ENCODE measurements at regions of chr9 and their contacts with region 1.

Region 1: GRCh38 chr9:35903049-35903448 is 3.0 kb upstream of the HRCT1 start:
- DNase-seq: peak in 4 of 5 donors; percentile 64 to 68 (median 65)
- H3K4me3 ChIP-seq: no peak overlapping the region
- H3K4me3 Mint-ChIP-seq: peak overlapping the region in 1 of 8 donors; percentile 13
- H3K27ac ChIP-seq: no peak overlapping the region
- H3K27ac Mint-ChIP-seq: peak overlapping the region in 3 of 7 donors; percentile 30 to 58 (median 48)
- H3K4me1 ChIP-seq: peaks cover 40% of the 10 kb centered on the region
- H3K4me1 Mint-ChIP-seq: peaks cover 17 to 50% (median 31%) of the 10 kb centered on the region in 4 donors
- H3K27me3 ChIP-seq: no peaks in the 10 kb centered on the region
- H3K27me3 Mint-ChIP-seq: peaks cover 0 to 4% of the 10 kb centered on the region in 2 donors

Region 2: GRCh38 chr9:35871497-35871896 is 31.6 kb before region 1 on chr9:
- CTCF ChIA-PET with region 1: no interaction called
- POLR2A ChIA-PET with region 1: no interaction called
- intact Hi-C with region 1: no loop called
- DNase-seq: no peak
- H3K4me3 ChIP-seq: no peak overlapping the region
- H3K4me3 Mint-ChIP-seq: no peak overlapping the region
- H3K27ac ChIP-seq: no peak overlapping the region
- H3K27ac Mint-ChIP-seq: no peak overlapping the region
- H3K4me1 ChIP-seq: no peaks in the 10 kb centered on the region
- H3K4me1 Mint-ChIP-seq: no peaks in the 10 kb centered on the region
- H3K27me3 ChIP-seq: no peaks in the 10 kb centered on the region
- H3K27me3 Mint-ChIP-seq: no peaks in the 10 kb centered on the region

Region 3: DNA sequence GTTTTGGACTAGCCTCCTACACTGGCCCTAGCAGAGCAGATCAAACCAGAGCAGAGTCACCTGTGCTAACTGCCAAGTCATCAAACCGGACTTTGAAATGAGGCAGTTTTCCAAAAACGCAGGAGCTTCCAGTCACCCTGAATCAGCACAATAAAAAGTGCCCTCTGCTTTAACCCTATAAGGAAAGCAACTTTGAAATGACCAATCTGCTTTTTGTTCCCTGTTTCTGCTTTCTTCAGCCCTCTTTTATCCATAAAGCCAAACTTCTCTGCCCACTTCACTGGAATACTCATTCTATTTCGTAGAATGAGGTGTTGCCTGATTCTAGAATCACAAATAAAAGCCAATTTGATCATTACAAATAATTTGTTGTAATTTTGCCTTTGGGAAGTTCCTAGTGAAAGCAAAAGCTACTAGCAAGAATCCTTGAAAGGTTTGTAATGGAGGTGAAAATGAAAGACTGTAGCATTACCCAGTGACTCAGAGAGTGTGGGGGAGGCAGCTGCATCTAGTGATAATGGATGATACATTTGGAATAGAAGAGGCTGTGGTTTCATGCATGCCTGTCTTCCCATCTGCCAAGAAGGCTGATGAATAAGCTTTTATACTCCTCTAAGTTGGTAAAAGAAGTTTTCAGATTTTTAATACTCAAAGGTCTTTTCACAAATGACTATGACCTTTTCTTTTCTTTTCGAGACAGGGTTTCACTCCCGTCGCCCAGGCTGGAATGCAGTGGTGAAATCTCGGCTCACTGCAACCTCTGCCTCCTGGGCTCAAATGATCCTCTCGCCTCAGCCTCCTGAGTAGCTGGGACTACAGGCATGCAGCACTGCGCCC is 21.1 kb after region 1 on chr9:
- CTCF ChIA-PET with region 1: interaction called, 10 read pairs
- POLR2A ChIA-PET with region 1: interaction called, 3 read pairs
- intact Hi-C with region 1: no loop called
- DNase-seq: no peak
- H3K4me3 ChIP-seq: no peak overlapping the region
- H3K4me3 Mint-ChIP-seq: no peak overlapping the region
- H3K27ac ChIP-seq: no peak overlapping the region
- H3K27ac Mint-ChIP-seq: peak overlapping the region in 1 of 7 donors; percentile 37
- H3K4me1 ChIP-seq: no peaks in the 10 kb centered on the region
- H3K4me1 Mint-ChIP-seq: peaks cover 0 to 16% (median 3%) of the 10 kb centered on the region in 4 donors
- H3K27me3 ChIP-seq: no peaks in the 10 kb centered on the region
- H3K27me3 Mint-ChIP-seq: no peaks in the 10 kb centered on the region

Region 4: GRCh38 chr9:35945341-35946018 is 42.4 kb after region 1 on chr9:
- CTCF ChIA-PET with region 1: interaction called, 379 read pairs
- POLR2A ChIA-PET with region 1: interaction called, 10 read pairs
- intact Hi-C with region 1: loop called (anchors 1 kb)
- DNase-seq: peak; percentile 43 to 58 (median 55)
- H3K4me3 ChIP-seq: no peak overlapping the region
- H3K4me3 Mint-ChIP-seq: peak overlapping the region in 7 of 8 donors; percentile 26 to 74 (median 61)
- H3K27ac ChIP-seq: no peak overlapping the region
- H3K27ac Mint-ChIP-seq: peak overlapping the region; percentile 3 to 82 (median 58)
- H3K4me1 ChIP-seq: peaks cover 70% of the 10 kb centered on the region
- H3K4me1 Mint-ChIP-seq: peaks cover 43 to 72% (median 65%) of the 10 kb centered on the region in 4 donors
- H3K27me3 ChIP-seq: no peaks in the 10 kb centered on the region
- H3K27me3 Mint-ChIP-seq: no peaks in the 10 kb centered on the region

Region 5: DNA sequence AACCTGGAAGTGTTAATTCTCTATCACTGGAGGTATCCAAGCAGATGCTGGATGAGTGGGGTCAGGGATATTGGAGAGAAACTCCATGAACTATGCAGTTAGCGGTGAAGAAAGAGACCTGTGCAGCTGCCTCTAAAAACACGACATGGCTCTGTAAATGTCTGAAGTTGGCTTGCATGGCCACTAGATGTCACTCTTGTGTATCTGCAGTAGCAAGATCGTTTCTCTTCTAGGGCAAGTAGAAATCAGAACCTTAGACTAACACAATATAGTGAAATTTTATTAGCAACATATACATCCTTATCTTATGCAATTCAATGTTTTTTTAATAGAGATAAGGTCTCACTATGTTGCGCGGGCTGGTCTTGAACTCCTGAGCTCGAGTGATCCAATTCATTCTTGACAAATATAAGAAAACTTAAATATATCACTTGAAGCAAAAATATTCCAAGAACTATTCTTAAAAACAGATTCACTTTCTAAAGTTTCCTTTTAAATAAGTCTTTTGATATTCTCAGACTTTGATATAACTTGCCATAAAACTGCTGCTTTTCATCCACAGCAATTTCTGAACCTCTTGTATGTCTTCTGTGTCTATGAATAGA is 52.0 kb after region 1 on chr9:
- CTCF ChIA-PET with region 1: interaction called, 18 read pairs
- POLR2A ChIA-PET with region 1: no interaction called
- intact Hi-C with region 1: no loop called
- DNase-seq: peak; percentile 43 to 68 (median 65)
- H3K4me3 ChIP-seq: no peak overlapping the region
- H3K4me3 Mint-ChIP-seq: peak overlapping the region in 1 of 8 donors; percentile 44
- H3K27ac ChIP-seq: no peak overlapping the region
- H3K27ac Mint-ChIP-seq: no peak overlapping the region
- H3K4me1 ChIP-seq: peaks cover 6% of the 10 kb centered on the region
- H3K4me1 Mint-ChIP-seq: peaks cover 5 to 7% (median 6%) of the 10 kb centered on the region in 4 donors
- H3K27me3 ChIP-seq: no peaks in the 10 kb centered on the region
- H3K27me3 Mint-ChIP-seq: peaks cover 4 to 9% of the 10 kb centered on the region in 2 donors

Region 6: DNA sequence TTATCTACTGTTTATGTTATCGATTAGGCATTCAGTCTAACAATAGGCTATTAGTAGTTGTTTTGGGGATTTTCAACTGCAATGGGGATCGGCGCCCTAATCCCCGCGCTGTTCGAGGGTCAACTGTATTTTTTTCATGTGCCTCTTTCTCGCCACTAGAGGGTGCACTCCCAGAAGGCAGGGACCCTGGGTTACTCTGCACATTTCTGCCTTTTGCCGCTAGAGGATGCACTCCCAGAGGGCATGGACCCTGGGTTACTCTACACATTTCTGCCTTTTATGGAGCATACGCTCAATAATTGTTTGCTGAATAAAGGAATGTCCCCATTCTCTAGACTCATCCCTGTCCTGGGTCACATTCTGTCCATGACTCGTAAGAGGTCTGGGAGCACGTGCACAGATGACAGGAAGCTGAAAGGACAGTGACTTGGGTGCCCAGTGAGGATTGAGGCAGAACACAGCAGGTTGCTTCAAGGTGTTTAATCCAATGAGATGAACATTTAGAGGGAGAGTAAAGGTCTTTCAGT is 105.8 kb after region 1 on chr9:
- CTCF ChIA-PET with region 1: interaction called, 10 read pairs
- POLR2A ChIA-PET with region 1: no interaction called
- intact Hi-C with region 1: no loop called
- DNase-seq: peak; percentile 59 to 74 (median 68)
- H3K4me3 ChIP-seq: no peak overlapping the region
- H3K4me3 Mint-ChIP-seq: peak overlapping the region in 1 of 8 donors; percentile 22
- H3K27ac ChIP-seq: no peak overlapping the region
- H3K27ac Mint-ChIP-seq: peak overlapping the region in 1 of 7 donors; percentile 10
- H3K4me1 ChIP-seq: peaks cover 3% of the 10 kb centered on the region
- H3K4me1 Mint-ChIP-seq: peaks cover 14 to 17% (median 15%) of the 10 kb centered on the region in 4 donors
- H3K27me3 ChIP-seq: no peaks in the 10 kb centered on the region
- H3K27me3 Mint-ChIP-seq: peaks cover 10 to 23% of the 10 kb centered on the region in 2 donors

Region 7: GRCh38 chr9:36530224-36530623 is 627.2 kb after region 1 on chr9:
- CTCF ChIA-PET with region 1: no interaction called
- POLR2A ChIA-PET with region 1: no interaction called
- intact Hi-C with region 1: no loop called
- DNase-seq: no peak
- H3K4me3 ChIP-seq: no peak overlapping the region
- H3K4me3 Mint-ChIP-seq: no peak overlapping the region
- H3K27ac ChIP-seq: no peak overlapping the region
- H3K27ac Mint-ChIP-seq: no peak overlapping the region
- H3K4me1 ChIP-seq: no peaks in the 10 kb centered on the region
- H3K4me1 Mint-ChIP-seq: peaks cover 0 to 4% (median 0%) of the 10 kb centered on the region in 4 donors
- H3K27me3 ChIP-seq: no peaks in the 10 kb centered on the region
- H3K27me3 Mint-ChIP-seq: no peaks in the 10 kb centered on the region

Region 8: GRCh38 chr9:37592108-37592951 is 1689.3 kb after region 1 on chr9 and contains the start of gene TOMM5:
- CTCF ChIA-PET with region 1: no interaction called
- POLR2A ChIA-PET with region 1: no interaction called
- intact Hi-C with region 1: no loop called
- DNase-seq: peak; percentile 90 to 93 (median 92)
- H3K4me3 ChIP-seq: peak within 1 kb of the TSS; percentile 92 to 100
- H3K4me3 Mint-ChIP-seq: peak within 1 kb of the TSS; percentile 97 to 100 (median 98)
- H3K27ac ChIP-seq: peak within 1 kb of the TSS; percentile 79
- H3K27ac Mint-ChIP-seq: peak within 1 kb of the TSS; percentile 96 to 99 (median 98)
- H3K4me1 ChIP-seq: peaks cover 39% of the 10 kb centered on the region
- H3K4me1 Mint-ChIP-seq: peaks cover 22 to 50% (median 36%) of the 10 kb centered on the region in 4 donors
- H3K27me3 ChIP-seq: no peaks in the 10 kb centered on the region
- H3K27me3 Mint-ChIP-seq: peaks cover 3 to 10% of the 10 kb centered on the region in 2 donors
- total RNA-seq, gene TOMM5: 48.2 to 51.1 TPM

Measured in CD4-positive, alpha-beta memory T cell (primary cell).